ENCODE measurements at regions of chr2 and their contacts with region 1.

Region 1: DNA sequence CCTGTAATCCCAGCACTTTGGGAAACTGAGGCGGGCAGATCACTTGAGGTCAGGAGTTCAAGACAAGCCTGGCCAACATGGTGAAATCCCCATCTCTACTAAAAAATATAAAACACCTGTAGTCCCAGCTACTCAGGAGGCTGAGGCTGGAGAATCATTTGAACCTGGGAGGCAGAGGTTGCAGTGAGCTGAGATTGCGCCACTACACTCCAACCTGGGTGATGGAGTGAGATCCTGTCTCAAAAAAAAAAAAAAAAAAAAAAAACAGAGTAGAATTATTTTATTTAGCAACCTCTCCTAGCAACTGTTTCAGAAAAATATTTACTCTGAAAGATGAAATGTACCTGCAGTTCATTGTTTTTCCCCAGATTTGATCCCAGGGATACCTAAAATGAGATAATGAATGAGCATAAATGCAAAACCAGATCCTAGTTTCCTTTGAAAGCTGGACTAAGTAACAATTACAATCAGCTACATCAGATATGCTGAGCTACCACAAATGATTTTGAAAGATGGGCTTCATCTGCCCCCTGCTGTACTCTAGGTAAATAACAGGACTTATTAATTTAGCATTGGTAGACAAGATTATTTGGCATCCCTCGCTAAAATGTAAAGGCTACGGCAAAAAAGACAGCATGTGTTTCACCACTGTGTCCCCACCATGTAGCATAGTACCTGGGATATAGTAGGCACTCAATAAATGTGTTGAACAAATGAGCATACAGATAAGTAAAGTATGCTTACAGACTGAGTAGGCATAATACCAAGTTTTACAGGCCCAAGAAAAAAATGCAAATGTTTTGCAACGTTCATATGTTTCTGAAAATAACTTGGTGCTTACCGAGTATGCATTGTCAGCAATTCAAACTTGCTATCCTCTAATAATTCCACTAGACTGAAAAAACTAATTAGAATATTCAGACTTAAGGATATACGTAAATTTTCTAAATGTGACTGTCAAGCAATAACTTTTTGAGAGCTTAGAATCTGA is 102.5 kb downstream of the ATL2 start:
- DNase-seq: peak in 6 of 14 experiments; percentile 9 to 71 (median 47)
- ATAC-seq: peak; percentile 57
- H3K4me3 ChIP-seq: no peak overlapping the region
- H3K4me3 Mint-ChIP-seq: no peak overlapping the region
- H3K27ac ChIP-seq: no peak overlapping the region
- H3K27ac Mint-ChIP-seq: no peak overlapping the region
- H3K4me1 ChIP-seq: no peaks in the 10 kb centered on the region
- H3K4me1 Mint-ChIP-seq: no peaks in the 10 kb centered on the region
- H3K27me3 ChIP-seq: no peaks in the 10 kb centered on the region
- H3K27me3 Mint-ChIP-seq: no peaks in the 10 kb centered on the region
- CTCF ChIP-seq: peak; percentile 57

Region 2: GRCh38 chr2:37890893-37891495 is 383.6 kb before region 1 on chr2:
- CTCF ChIA-PET with region 1: no interaction called
- POLR2A ChIA-PET with region 1: no interaction called
- intact Hi-C with region 1: loop called (anchors 10 kb)
- DNase-seq: peak; percentile 39 to 78 (median 57)
- ATAC-seq: peak; percentile 65
- H3K4me3 ChIP-seq: no peak overlapping the region
- H3K4me3 Mint-ChIP-seq: no peak overlapping the region
- H3K27ac ChIP-seq: no peak overlapping the region
- H3K27ac Mint-ChIP-seq: no peak overlapping the region
- H3K4me1 ChIP-seq: peaks cover 40% of the 10 kb centered on the region
- H3K4me1 Mint-ChIP-seq: peaks cover 51% of the 10 kb centered on the region
- H3K27me3 ChIP-seq: peaks cover 0 to 4% of the 10 kb centered on the region in 2 experiments
- H3K27me3 Mint-ChIP-seq: peaks cover 2% of the 10 kb centered on the region
- CTCF ChIP-seq: peak; percentile 79

Region 3: DNA sequence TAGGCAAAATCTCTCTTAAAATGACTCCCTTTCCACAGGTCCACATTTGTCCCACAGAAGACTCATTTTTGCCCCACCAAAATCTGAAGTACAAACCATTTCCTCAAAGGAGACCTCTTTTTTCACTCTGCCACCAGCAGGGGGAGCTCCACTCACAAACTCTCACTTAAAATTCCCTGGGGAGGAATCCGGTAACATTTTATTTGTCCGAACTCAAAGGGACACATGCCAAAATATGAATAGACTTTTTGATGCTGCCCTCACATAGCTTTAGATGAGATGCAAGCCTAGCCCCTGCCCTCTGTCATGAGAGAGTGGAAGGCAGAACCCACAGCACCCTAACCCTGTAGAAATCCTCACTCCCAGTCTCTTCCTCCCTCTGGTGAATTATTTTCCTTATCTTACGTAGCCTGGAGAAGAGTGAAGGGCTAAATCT is 292.4 kb before region 1 on chr2:
- CTCF ChIA-PET with region 1: interaction called, 3 read pairs
- POLR2A ChIA-PET with region 1: no interaction called
- intact Hi-C with region 1: loop called (anchors 1 to 2 kb)
- DNase-seq: peak; percentile 7 to 74 (median 46)
- ATAC-seq: no peak
- H3K4me3 ChIP-seq: no peak overlapping the region
- H3K4me3 Mint-ChIP-seq: no peak overlapping the region
- H3K27ac ChIP-seq: no peak overlapping the region
- H3K27ac Mint-ChIP-seq: no peak overlapping the region
- H3K4me1 ChIP-seq: no peaks in the 10 kb centered on the region
- H3K4me1 Mint-ChIP-seq: peaks cover 4% of the 10 kb centered on the region
- H3K27me3 ChIP-seq: peaks cover 0 to 5% of the 10 kb centered on the region in 2 experiments
- H3K27me3 Mint-ChIP-seq: no peaks in the 10 kb centered on the region
- CTCF ChIP-seq: peak; percentile 93